HepG2 (cell line): ENCODE measurements at regions of chr16 and their contacts with region 1.

Region 1: DNA sequence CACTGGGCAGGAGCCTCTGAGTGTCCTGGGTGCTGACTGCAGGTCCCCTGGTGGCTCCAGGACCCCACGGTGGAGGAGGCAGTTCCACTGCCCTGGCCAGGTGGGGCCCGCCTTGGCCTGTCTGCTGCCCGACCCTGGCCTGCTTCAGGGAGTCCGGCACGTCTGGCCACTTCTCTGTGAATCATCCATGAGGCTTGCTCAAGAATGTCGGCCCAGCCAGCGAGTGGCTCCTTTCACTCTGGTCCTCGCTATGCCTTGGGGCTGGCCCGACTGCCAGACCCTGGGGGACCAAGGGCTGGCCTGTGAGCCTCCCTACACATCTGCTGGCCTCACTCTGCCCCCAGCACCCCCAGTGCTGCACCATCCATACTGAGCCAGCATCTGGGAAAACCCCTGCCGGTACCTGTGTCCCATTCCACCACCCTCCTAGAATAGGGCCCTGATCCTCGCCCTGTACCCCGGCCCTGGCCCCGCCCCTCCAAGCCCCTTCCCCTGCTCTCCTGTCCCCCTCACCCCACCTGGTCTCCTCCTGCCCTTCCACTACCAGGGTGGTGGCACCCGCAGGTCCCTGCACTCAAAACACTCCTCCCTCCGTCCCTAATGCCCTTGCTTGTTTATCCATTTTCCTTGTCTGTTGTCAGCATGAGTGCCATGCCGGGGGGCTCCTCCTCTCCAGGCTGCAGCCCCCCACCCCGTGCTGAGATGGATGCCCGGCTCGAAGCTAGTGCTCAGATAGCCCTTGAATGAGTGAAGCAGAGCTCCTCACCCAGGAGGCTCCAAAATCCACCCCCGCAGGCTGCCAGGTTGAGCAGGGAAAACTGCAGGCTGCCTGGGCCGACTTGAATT is 35.5 kb downstream of the ADCY7 start:
- DNase-seq: no peak
- ATAC-seq: peak; percentile 15
- H3K4me3 ChIP-seq: peak overlapping the region in 2 of 3 experiments; percentile 25 to 55; a peak in 3 of 6 replicates
- H3K27ac ChIP-seq: no peak overlapping the region
- H3K4me1 ChIP-seq: peaks cover 59% of the 10 kb centered on the region
- H3K27me3 ChIP-seq: peaks cover 0 to 5% of the 10 kb centered on the region in 2 experiments; a peak in 1 of 5 replicates
- CTCF ChIP-seq: no peak
- EP300 ChIP-seq: no peak
- POLR2A ChIP-seq: no peak
- RAD21 ChIP-seq: no peak

Region 2: GRCh38 chr16:50259334-50260205 is 42.3 kb before region 1 on chr16:
- CTCF ChIA-PET with region 1: no interaction called
- POLR2A ChIA-PET with region 1: interaction called, 5 read pairs
- in situ Hi-C with region 1: no loop called
- intact Hi-C with region 1: loop called (anchors 5 kb)
- DNase-seq: no peak
- ATAC-seq: peak; percentile 32
- H3K4me3 ChIP-seq: peak overlapping the region in 2 of 3 experiments; percentile 20 to 24; a peak in 2 of 6 replicates
- H3K27ac ChIP-seq: no peak overlapping the region
- H3K4me1 ChIP-seq: peaks cover 56% of the 10 kb centered on the region
- H3K27me3 ChIP-seq: peaks cover 6 to 37% of the 10 kb centered on the region in 2 experiments; a peak in 4 of 5 replicates
- CTCF ChIP-seq: no peak
- EP300 ChIP-seq: no peak
- POLR2A ChIP-seq: no peak
- RAD21 ChIP-seq: no peak

Region 3: GRCh38 chr16:50266337-50267091 is 35.3 kb before region 1 on chr16 and contains the start of gene ADCY7:
- CTCF ChIA-PET with region 1: no interaction called
- POLR2A ChIA-PET with region 1: interaction called, 5 read pairs
- in situ Hi-C with region 1: loop called (anchors 5 kb)
- intact Hi-C with region 1: no loop called
- DNase-seq: no peak
- ATAC-seq: no peak
- H3K4me3 ChIP-seq: no peak within 1 kb of the TSS
- H3K27ac ChIP-seq: no peak within 1 kb of the TSS
- H3K4me1 ChIP-seq: peaks cover 67% of the 10 kb centered on the region
- H3K27me3 ChIP-seq: peaks cover 3 to 11% of the 10 kb centered on the region in 2 experiments
- CTCF ChIP-seq: no peak
- EP300 ChIP-seq: no peak
- POLR2A ChIP-seq: no peak
- RAD21 ChIP-seq: no peak
- total RNA-seq, gene ADCY7: 2.3 and 4.3 TPM in 2 replicates

Region 4: GRCh38 chr16:50281964-50282538 is 19.8 kb before region 1 on chr16:
- CTCF ChIA-PET with region 1: no interaction called
- POLR2A ChIA-PET with region 1: interaction called, 13 read pairs
- in situ Hi-C with region 1: no loop called
- intact Hi-C with region 1: no loop called
- DNase-seq: no peak
- ATAC-seq: peak; percentile 6
- H3K4me3 ChIP-seq: peak overlapping the region in 2 of 3 experiments; percentile 4 to 55; a peak in 1 of 6 replicates
- H3K27ac ChIP-seq: no peak overlapping the region
- H3K4me1 ChIP-seq: peaks cover 53% of the 10 kb centered on the region
- H3K27me3 ChIP-seq: no peaks in the 10 kb centered on the region; a peak in 1 of 5 replicates
- CTCF ChIP-seq: no peak
- EP300 ChIP-seq: no peak
- POLR2A ChIP-seq: no peak
- RAD21 ChIP-seq: no peak